ENCODE measurements at regions of chr1 and their contacts with region 1.

Region 1: DNA sequence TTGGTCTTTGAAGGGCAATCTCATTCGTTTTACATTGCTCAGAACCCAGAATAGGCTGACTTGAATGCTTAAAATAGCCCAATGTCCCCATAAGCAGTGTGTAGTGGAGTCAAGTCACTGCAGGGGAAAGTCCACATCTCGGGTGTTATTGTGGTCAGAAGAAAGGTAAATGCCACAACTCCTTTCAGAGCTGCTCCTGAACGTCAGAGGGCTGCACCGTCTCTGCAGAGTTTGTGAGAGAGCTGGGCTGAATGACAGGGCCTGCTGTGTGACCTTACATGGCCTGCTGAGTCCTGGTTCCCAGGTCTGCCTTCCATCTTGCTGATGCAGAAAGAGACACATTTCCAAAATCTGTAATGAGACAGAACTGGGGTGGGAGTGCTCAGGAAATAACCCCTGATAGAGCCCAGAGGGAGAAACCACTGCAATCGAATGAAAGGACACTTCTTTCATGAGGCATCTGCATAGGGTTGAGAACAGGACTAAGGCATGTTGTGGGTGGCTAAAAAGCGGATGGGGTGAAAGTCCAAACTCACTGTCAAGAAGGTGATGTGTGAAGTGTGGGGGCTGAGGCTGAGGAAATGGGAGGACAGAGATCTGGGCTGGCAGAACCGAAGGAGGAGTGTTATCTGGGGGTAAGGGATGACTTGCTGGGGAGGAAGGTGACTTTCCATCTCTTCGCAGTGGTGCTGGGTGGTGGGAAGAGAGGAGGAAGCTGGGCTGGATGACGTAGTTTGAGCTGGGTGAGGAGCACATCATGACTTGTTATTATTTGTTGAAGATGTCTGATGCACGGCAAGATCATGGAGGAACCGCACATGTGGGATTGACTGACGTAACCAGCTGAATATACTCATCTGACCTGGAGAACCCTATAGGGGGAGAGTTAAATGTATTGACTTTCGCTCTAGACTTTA is 33.7 kb downstream of the XCL2 start:
- DNase-seq: peak; percentile 27
- H3K4me3 Mint-ChIP-seq: no peak overlapping the region
- H3K27ac Mint-ChIP-seq: peak overlapping the region; percentile 77
- H3K4me1 Mint-ChIP-seq: peaks cover 82% of the 10 kb centered on the region
- H3K27me3 Mint-ChIP-seq: peaks cover 1% of the 10 kb centered on the region

Region 2: GRCh38 chr1:167763525-167764220 is 746.5 kb before region 1 on chr1:
- intact Hi-C with region 1: no loop called
- DNase-seq: no peak
- H3K4me3 Mint-ChIP-seq: no peak overlapping the region
- H3K27ac Mint-ChIP-seq: no peak overlapping the region
- H3K4me1 Mint-ChIP-seq: peaks cover 45% of the 10 kb centered on the region
- H3K27me3 Mint-ChIP-seq: no peaks in the 10 kb centered on the region

Region 3: GRCh38 chr1:168572633-168573032 is 62.5 kb after region 1 on chr1:
- intact Hi-C with region 1: loop called (anchors 10 kb)
- DNase-seq: no peak
- H3K4me3 Mint-ChIP-seq: no peak overlapping the region
- H3K27ac Mint-ChIP-seq: no peak overlapping the region
- H3K4me1 Mint-ChIP-seq: peaks cover 39% of the 10 kb centered on the region
- H3K27me3 Mint-ChIP-seq: peaks cover 9% of the 10 kb centered on the region